ENCODE measurements at regions of chr18 and their contacts with region 1.

Region 1: DNA sequence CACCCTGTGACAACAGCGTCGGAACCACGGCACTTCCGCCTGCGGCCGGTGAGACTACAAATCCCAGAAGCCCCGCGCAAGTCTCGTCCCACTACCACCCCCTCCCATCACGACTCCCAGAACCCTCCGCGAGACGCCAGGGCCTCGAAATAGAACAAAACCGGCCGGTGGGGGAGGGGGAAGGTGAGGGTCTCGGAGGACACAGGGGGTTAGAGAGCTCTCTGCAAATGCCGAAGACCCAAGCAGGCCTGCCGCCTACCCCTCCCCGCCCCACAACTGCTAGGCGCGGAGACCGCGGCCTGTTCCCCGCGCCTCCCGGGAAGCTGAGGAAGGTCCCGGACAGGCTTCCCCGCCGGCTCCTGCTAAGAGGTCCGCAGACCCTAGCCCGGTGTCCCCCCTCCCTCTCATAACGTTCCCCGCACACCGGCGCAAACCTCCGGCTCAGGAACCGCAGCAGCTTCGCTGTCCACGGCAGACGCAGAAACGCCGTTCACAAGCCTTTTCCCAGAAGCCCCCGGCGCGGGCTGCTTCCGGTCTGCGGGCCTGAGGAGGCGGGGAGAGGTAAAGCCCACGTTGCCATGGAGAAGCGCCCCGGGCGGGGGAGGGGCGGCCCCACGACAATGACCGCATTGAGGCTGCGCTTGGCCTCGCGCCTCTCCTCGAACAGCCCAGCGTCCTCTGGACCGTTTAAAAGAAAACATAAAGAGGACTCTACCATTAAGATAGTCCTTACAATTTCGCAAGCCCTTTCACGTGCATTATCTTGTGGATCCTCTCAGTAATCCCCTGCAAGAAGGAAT is at the start of gene ZNF24:
- DNase-seq: peak; percentile 93
- H3K4me3 Mint-ChIP-seq: peak within 1 kb of the TSS; percentile 88
- H3K27ac Mint-ChIP-seq: peak within 1 kb of the TSS; percentile 86
- H3K4me1 Mint-ChIP-seq: peaks cover 14% of the 10 kb centered on the region
- H3K27me3 Mint-ChIP-seq: no peaks in the 10 kb centered on the region
- CTCF ChIP-seq: no peak
- total RNA-seq, gene ZNF24: 39.1 and 44.0 TPM in 2 replicates

Region 2: DNA sequence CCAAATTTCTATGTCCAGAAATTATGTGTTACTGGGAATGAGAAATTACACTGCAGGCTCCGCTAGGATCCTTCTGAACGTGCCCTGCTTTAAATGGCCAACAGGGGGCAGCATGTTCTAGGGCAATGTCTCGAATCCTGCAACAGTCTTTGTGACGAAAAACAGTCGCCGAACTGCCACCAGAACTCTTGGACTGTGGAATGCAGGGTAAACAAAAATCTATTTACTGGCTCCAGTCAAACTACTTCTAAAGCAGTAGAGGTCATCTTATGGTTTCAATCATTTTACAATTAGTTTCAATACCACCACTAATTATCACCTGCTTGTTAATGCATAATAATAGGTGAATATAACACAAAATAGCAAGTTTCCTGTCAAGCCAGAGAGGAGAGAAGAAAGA is 113.1 kb before region 1 on chr18:
- CTCF ChIA-PET with region 1: interaction called, 12 read pairs
- POLR2A ChIA-PET with region 1: interaction called, 4 read pairs
- intact Hi-C with region 1: no loop called
- DNase-seq: peak; percentile 82
- H3K4me3 Mint-ChIP-seq: peak overlapping the region; percentile 52
- H3K27ac Mint-ChIP-seq: no peak overlapping the region
- H3K4me1 Mint-ChIP-seq: peaks cover 4% of the 10 kb centered on the region
- H3K27me3 Mint-ChIP-seq: no peaks in the 10 kb centered on the region
- CTCF ChIP-seq: peak; percentile 83

Region 3: DNA sequence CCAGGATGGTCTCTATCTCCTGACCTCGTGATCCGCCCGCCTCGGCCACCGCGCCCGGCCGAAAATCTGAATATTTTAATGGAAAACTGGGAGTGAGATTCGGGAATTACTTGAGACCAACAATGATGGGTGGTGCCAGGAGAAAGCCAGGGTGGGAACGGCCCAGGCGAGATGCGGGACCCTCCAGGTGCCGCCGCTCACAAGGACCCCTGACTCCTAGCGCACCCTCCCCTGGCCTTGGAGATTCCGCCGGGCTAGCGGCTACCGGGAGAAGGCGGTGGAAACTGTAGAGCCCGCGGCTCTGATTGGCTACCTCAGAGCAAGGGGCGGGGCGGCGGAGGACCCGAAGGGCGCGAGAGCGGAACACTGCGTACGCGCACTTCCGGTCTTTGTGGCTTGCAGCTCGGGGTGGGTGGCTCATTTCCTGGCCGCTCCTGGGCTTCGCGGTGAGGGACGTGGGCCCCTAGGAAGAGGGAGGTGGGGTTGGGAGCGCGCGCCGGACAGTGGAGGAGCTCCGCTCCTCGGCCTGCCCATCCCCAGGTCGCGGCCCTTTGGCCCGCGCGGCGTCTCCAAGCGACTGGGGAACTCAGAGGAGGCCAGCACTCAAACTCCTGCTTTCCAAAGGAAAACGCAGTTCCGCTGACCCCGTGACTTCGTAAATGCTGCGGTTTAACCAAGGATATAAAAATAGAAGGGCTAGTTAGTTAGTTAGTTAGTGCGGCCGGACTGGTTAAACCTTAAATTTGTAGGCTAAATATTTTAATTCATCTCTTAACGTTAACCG is 103.3 kb before region 1 on chr18 and contains the start of gene ZNF397:
- CTCF ChIA-PET with region 1: interaction called, 3 read pairs
- POLR2A ChIA-PET with region 1: interaction called, 26 read pairs
- intact Hi-C with region 1: loop called (anchors 2 kb)
- DNase-seq: peak; percentile 96
- H3K4me3 Mint-ChIP-seq: peak within 1 kb of the TSS; percentile 95
- H3K27ac Mint-ChIP-seq: peak within 1 kb of the TSS; percentile 97
- H3K4me1 Mint-ChIP-seq: no peaks in the 10 kb centered on the region
- H3K27me3 Mint-ChIP-seq: no peaks in the 10 kb centered on the region
- CTCF ChIP-seq: no peak
- total RNA-seq, gene ZNF397: 22.5 and 26.5 TPM in 2 replicates

Region 4: DNA sequence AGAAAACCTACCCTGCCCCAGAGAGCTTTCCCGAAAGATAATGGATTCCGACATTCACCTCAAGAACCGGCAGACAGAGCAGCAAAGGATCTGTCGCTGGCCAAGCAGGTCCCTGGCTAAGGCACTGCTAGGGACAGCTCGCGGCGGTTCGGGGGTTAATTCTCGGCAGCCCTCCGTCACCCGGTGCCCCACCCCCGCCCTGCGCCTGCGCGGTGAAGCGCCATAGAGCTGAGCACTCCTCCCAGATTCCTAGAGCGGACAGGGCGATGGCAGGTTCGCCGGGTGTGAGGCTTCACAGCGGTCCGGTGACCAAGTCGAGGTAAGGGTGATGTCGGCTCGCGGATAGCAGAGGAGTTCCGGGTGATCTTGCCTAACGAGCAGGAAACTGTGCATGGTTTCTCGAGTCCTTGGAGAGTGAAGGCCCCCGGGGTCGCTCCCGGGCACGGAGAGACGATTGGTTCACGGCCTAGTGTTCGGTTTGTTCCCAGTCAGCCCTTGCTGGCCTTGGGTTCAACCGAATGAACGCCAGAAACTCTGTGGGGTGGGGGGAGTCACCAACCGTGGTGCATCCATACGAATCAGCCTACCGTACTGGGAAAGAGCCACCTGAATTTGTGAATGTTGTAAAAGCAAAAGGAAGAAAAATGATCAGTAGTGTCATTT is 53.9 kb before region 1 on chr18 and contains the start of gene ZSCAN30:
- CTCF ChIA-PET with region 1: no interaction called
- POLR2A ChIA-PET with region 1: interaction called, 15 read pairs
- intact Hi-C with region 1: loop called (anchors 5 kb)
- DNase-seq: peak; percentile 94
- H3K4me3 Mint-ChIP-seq: peak within 1 kb of the TSS; percentile 97
- H3K27ac Mint-ChIP-seq: peak within 1 kb of the TSS; percentile 97
- H3K4me1 Mint-ChIP-seq: peaks cover 12% of the 10 kb centered on the region
- H3K27me3 Mint-ChIP-seq: no peaks in the 10 kb centered on the region
- CTCF ChIP-seq: no peak
- total RNA-seq, gene ZSCAN30: 20.5 and 30.1 TPM in 2 replicates

Region 5: DNA sequence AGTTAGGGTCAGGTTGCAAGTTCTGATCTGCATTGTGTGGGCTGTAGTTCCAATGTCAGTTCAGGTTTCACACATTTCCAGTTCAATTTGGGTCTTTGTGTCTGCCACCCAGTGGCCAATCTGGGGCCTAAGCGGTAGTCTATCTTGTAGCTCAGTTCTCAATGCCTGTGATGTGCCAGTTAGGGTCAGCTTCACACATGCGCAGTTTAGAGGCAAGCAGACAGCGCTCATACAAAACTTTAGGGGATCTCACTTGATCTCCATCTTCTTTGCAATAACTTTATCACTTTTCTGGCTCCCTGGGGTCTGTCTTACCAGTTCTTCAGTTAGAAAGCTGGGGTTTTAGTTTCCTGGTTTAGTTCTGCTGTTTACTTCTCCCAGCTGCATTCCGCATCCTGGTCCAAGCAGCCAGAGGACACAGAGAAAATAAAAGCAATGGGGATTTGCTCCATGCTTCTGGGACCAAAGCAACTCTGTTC is 11.0 kb after region 1 on chr18:
- CTCF ChIA-PET with region 1: interaction called, 18 read pairs
- POLR2A ChIA-PET with region 1: interaction called, 8 read pairs
- intact Hi-C with region 1: no loop called
- DNase-seq: peak; percentile 72
- H3K4me3 Mint-ChIP-seq: no peak overlapping the region
- H3K27ac Mint-ChIP-seq: no peak overlapping the region
- H3K4me1 Mint-ChIP-seq: no peaks in the 10 kb centered on the region
- H3K27me3 Mint-ChIP-seq: no peaks in the 10 kb centered on the region
- CTCF ChIP-seq: peak; percentile 50

Measured in MCF 10A (cell line).